HepG2 (cell line): ENCODE measurements at regions of chr6 and their contacts with region 1.

Region 1: GRCh38 chr6:31652925-31653718 is 661 bp upstream of the BAG6 start:
- DNase-seq: peak; percentile 98
- ATAC-seq: peak; percentile 55
- H3K4me3 ChIP-seq: peak overlapping the region; percentile 73 to 88 (median 77)
- H3K27ac ChIP-seq: peak overlapping the region; percentile 96
- H3K4me1 ChIP-seq: peaks cover 70% of the 10 kb centered on the region
- H3K27me3 ChIP-seq: no peaks in the 10 kb centered on the region; a peak in 2 of 5 replicates
- CTCF ChIP-seq: peak; percentile 63
- EP300 ChIP-seq: no peak; a peak in 3 of 4 replicates
- POLR2A ChIP-seq: peak in 1 of 2 experiments; percentile 72; a peak in 1 of 4 replicates
- RAD21 ChIP-seq: 0 out of 2 replicates have a peak, but pooled peaks have one; percentile 7

Region 2: GRCh38 chr6:31546962-31547726 is 106.0 kb before region 1 on chr6 and contains the start of gene NFKBIL1:
- CTCF ChIA-PET with region 1: no interaction called
- POLR2A ChIA-PET with region 1: interaction called, 27 read pairs
- in situ Hi-C with region 1: no loop called
- intact Hi-C with region 1: loop called (anchors 10 kb)
- DNase-seq: peak; percentile 93
- ATAC-seq: peak; percentile 93
- H3K4me3 ChIP-seq: peak within 1 kb of the TSS; percentile 74 to 93 (median 76)
- H3K27ac ChIP-seq: peak within 1 kb of the TSS; percentile 64
- H3K4me1 ChIP-seq: peaks cover 43% of the 10 kb centered on the region
- H3K27me3 ChIP-seq: no peaks in the 10 kb centered on the region; a peak in 1 of 5 replicates
- CTCF ChIP-seq: peak; percentile 36; the same call in 1 of the 2 replicates
- EP300 ChIP-seq: peak in 1 of 2 experiments; percentile 37; a peak in 1 of 4 replicates
- POLR2A ChIP-seq: peak; percentile 37 to 63; a peak in 3 of 4 replicates
- RAD21 ChIP-seq: peak; percentile 12; the same call in 1 of the 2 replicates
- total RNA-seq, gene NFKBIL1: 13.9 and 19.5 TPM in 2 replicates

Region 3: GRCh38 chr6:31580807-31581433 is 72.2 kb before region 1 on chr6:
- CTCF ChIA-PET with region 1: no interaction called
- POLR2A ChIA-PET with region 1: no interaction called
- in situ Hi-C with region 1: no loop called
- intact Hi-C with region 1: no loop called
- DNase-seq: peak; percentile 61
- ATAC-seq: peak; percentile 94
- H3K4me3 ChIP-seq: peak overlapping the region; percentile 67 to 88 (median 78)
- H3K27ac ChIP-seq: no peak overlapping the region
- H3K4me1 ChIP-seq: peaks cover 25% of the 10 kb centered on the region
- H3K27me3 ChIP-seq: peaks cover 10 to 65% of the 10 kb centered on the region in 2 experiments; a peak in 4 of 5 replicates
- CTCF ChIP-seq: peak; percentile 95
- EP300 ChIP-seq: no peak
- POLR2A ChIP-seq: peak in 1 of 2 experiments; percentile 53; a peak in 1 of 4 replicates
- RAD21 ChIP-seq: peak; percentile 90

Region 4: GRCh38 chr6:31619805-31620585 is 33.1 kb before region 1 on chr6:
- CTCF ChIA-PET with region 1: no interaction called
- POLR2A ChIA-PET with region 1: interaction called, 78 read pairs
- in situ Hi-C with region 1: no loop called
- intact Hi-C with region 1: loop called (anchors 1 kb)
- DNase-seq: peak; percentile 99
- ATAC-seq: peak; percentile 90
- H3K4me3 ChIP-seq: peak overlapping the region; percentile 63 to 92 (median 75)
- H3K27ac ChIP-seq: peak overlapping the region; percentile 98
- H3K4me1 ChIP-seq: peaks cover 36% of the 10 kb centered on the region
- H3K27me3 ChIP-seq: no peaks in the 10 kb centered on the region; a peak in 1 of 5 replicates
- CTCF ChIP-seq: no peak
- EP300 ChIP-seq: no peak; a peak in 1 of 4 replicates
- POLR2A ChIP-seq: peak; percentile 81 to 85
- RAD21 ChIP-seq: peak; percentile 34; the same call in 1 of the 2 replicates

Region 5: DNA sequence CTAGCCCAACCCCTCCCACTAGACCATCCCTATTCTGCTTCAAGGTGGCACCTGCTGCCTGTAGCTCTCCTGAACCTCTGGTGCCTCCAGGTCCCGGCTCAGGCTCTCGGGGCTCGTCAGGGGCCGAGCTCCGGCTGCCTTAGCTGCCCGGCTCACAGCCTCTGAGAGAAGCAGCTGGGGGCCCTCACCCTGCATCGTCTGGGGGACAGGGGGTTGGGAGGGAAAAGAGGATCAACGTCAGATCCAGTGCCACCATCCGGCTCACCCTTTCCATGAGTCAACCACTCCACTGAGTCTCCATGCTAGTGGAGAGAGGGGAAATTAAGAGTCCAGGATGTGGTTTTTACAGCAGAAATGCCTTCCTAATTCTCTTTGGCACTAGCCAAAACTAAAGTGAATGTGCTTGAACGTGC is 13.7 kb before region 1 on chr6:
- CTCF ChIA-PET with region 1: no interaction called
- POLR2A ChIA-PET with region 1: interaction called, 104 read pairs
- in situ Hi-C with region 1: no loop called
- intact Hi-C with region 1: no loop called
- DNase-seq: no peak
- ATAC-seq: peak; percentile 4
- H3K4me3 ChIP-seq: no peak overlapping the region
- H3K27ac ChIP-seq: no peak overlapping the region
- H3K4me1 ChIP-seq: peaks cover 18% of the 10 kb centered on the region
- H3K27me3 ChIP-seq: no peaks in the 10 kb centered on the region
- CTCF ChIP-seq: no peak
- EP300 ChIP-seq: no peak
- POLR2A ChIP-seq: no peak; a peak in 1 of 4 replicates
- RAD21 ChIP-seq: no peak

Region 6: GRCh38 chr6:31702819-31703522 is 49.8 kb after region 1 on chr6 and contains the start of gene ABHD16A:
- CTCF ChIA-PET with region 1: no interaction called
- POLR2A ChIA-PET with region 1: interaction called, 12 read pairs
- in situ Hi-C with region 1: no loop called
- intact Hi-C with region 1: no loop called
- DNase-seq: peak; percentile 98
- ATAC-seq: peak; percentile 93
- H3K4me3 ChIP-seq: peak within 1 kb of the TSS; percentile 71 to 84 (median 81)
- H3K27ac ChIP-seq: peak within 1 kb of the TSS; percentile 85
- H3K4me1 ChIP-seq: peaks cover 39% of the 10 kb centered on the region
- H3K27me3 ChIP-seq: peaks cover 0 to 3% of the 10 kb centered on the region in 2 experiments; a peak in 2 of 5 replicates
- CTCF ChIP-seq: peak; percentile 33
- EP300 ChIP-seq: peak; percentile 56 to 79; a peak in 3 of 4 replicates
- POLR2A ChIP-seq: peak; percentile 93 to 96
- RAD21 ChIP-seq: no peak
- total RNA-seq, gene ABHD16A: 16.2 and 43.5 TPM in 2 replicates

Region 7: GRCh38 chr6:31945507-31946369 is 292.6 kb after region 1 on chr6 and contains the start of gene CFB:
- CTCF ChIA-PET with region 1: no interaction called
- POLR2A ChIA-PET with region 1: interaction called, 13 read pairs
- in situ Hi-C with region 1: no loop called
- intact Hi-C with region 1: no loop called
- DNase-seq: peak; percentile 100
- ATAC-seq: peak; percentile 95
- H3K4me3 ChIP-seq: peak within 1 kb of the TSS; percentile 59 to 90 (median 66)
- H3K27ac ChIP-seq: peak within 1 kb of the TSS; percentile 91
- H3K4me1 ChIP-seq: peaks cover 85% of the 10 kb centered on the region
- H3K27me3 ChIP-seq: no peaks in the 10 kb centered on the region; a peak in 1 of 5 replicates
- CTCF ChIP-seq: peak; percentile 8; the same call in 1 of the 2 replicates
- EP300 ChIP-seq: peak; percentile 89 to 94; a peak in 3 of 4 replicates
- POLR2A ChIP-seq: peak in 1 of 2 experiments; percentile 96; a peak in 2 of 4 replicates
- RAD21 ChIP-seq: peak; percentile 40
- total RNA-seq, gene CFB: 71.1 and 171 TPM in 2 replicates